ENCODE measurements at regions of chr14 and their contacts with region 1.

Region 1: DNA sequence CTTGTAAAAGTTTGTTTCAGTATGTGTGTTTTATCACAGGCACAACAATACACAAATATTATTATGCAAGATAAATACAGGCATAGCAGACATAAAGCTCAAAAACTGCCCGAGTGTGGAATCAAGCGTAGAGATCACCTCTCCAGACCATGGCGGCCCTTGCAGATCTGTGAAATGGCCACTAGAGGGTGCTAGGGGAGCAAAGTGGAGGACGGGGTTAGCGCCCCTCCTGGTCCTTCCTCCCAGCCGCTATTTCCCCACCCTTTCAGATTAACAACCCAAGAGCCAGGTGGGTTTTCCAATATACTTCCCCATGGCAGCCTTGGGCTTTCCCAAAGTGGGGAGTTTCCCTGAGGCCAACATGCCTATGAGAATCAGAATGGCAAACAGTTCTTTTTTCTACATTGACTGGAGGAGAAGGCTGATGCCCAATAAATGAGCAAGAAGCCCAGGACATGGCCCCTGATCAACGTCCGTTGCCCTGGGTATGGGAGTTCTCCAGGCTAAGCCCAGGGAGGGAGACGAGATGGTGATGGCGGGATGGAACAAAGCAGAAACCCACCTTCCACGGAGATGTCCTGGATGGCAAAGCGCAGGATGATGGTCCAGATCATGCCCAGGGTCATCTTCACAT is 67.4 kb downstream of the ACTN1 start:
- DNase-seq: peak; percentile 81 to 88 (median 88)
- ATAC-seq: peak; percentile 100
- H3K4me3 ChIP-seq: no peak overlapping the region
- H3K27ac ChIP-seq: no peak overlapping the region
- H3K4me1 ChIP-seq: no peaks in the 10 kb centered on the region
- H3K27me3 ChIP-seq: no peaks in the 10 kb centered on the region
- CTCF ChIP-seq: peak; percentile 95 to 100 (median 99)
- EP300 ChIP-seq: no peak
- POLR2A ChIP-seq: no peak
- RAD21 ChIP-seq: peak; percentile 83 to 89

Region 2: DNA sequence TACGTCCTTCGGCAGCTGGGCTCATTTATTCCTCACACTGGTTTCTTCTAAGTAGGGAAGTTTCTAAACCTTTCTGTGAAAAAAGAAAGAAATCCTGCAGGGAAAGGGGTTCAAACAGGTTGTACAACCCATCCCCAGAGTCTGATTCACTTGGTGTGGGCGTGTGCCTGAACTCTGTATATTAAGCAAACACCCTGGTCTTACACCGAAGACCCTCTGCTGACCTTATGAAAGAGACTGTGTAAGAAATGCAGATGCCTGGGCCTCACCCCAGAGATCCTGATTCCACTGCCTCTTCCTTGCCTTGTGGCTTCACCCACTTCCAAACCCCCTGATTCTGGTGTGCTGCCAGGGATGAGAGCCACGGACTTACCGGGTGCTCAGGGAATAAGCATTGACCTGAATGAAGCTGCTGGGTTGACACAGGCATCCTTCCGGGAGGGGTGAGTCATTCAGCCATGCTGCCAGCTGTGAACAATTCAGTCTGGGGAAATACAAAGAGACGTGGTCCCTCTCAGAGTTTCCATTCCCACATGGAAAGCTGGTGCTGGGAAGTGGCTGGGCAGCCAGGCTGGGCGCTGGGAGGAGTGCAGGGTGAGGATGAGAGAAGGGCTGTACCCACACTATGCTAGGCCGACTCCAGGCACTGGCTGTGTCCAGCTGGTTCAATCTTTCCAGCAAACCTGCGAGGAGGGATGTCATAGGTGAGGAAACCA is 93.9 kb after region 1 on chr14:
- CTCF ChIA-PET with region 1: interaction called, 3 read pairs
- POLR2A ChIA-PET with region 1: no interaction called
- in situ Hi-C with region 1: no loop called
- intact Hi-C with region 1: loop called (anchors 10 kb)
- DNase-seq: peak in 1 of 4 experiments; percentile 20
- ATAC-seq: peak; percentile 36; the same call in 1 of the 3 replicates
- H3K4me3 ChIP-seq: no peak overlapping the region
- H3K27ac ChIP-seq: no peak overlapping the region
- H3K4me1 ChIP-seq: peaks cover 0 to 4% of the 10 kb centered on the region in 2 experiments; a peak in 2 of 5 replicates
- H3K27me3 ChIP-seq: 0 out of 5 replicates have a peak, but pooled peaks cover 0 to 5% of the 10 kb centered on the region in 2 experiments
- CTCF ChIP-seq: no peak
- EP300 ChIP-seq: no peak
- POLR2A ChIP-seq: no peak
- RAD21 ChIP-seq: no peak

Region 3: GRCh38 chr14:69090187-69090789 is 178.6 kb after region 1 on chr14:
- CTCF ChIA-PET with region 1: interaction called, 6 read pairs
- POLR2A ChIA-PET with region 1: no interaction called
- in situ Hi-C with region 1: loop called (anchors 10 kb)
- intact Hi-C with region 1: loop called (anchors 1 kb)
- DNase-seq: peak; percentile 10 to 27 (median 16)
- ATAC-seq: peak; percentile 80
- H3K4me3 ChIP-seq: no peak overlapping the region
- H3K27ac ChIP-seq: no peak overlapping the region
- H3K4me1 ChIP-seq: peaks cover 0 to 9% of the 10 kb centered on the region in 2 experiments; a peak in 2 of 5 replicates
- H3K27me3 ChIP-seq: no peaks in the 10 kb centered on the region
- CTCF ChIP-seq: peak; percentile 52 to 56 (median 55)
- EP300 ChIP-seq: no peak
- POLR2A ChIP-seq: no peak
- RAD21 ChIP-seq: peak in 1 of 2 experiments; percentile 46; a peak in 2 of 4 replicates

Region 4: GRCh38 chr14:69107407-69108003 is 195.8 kb after region 1 on chr14:
- CTCF ChIA-PET with region 1: interaction called, 13 read pairs
- POLR2A ChIA-PET with region 1: no interaction called
- in situ Hi-C with region 1: no loop called
- intact Hi-C with region 1: loop called (anchors 2 kb)
- DNase-seq: peak; percentile 14 to 61 (median 26)
- ATAC-seq: peak; percentile 84
- H3K4me3 ChIP-seq: no peak overlapping the region
- H3K27ac ChIP-seq: no peak overlapping the region
- H3K4me1 ChIP-seq: no peaks in the 10 kb centered on the region
- H3K27me3 ChIP-seq: no peaks in the 10 kb centered on the region
- CTCF ChIP-seq: peak; percentile 59 to 74 (median 66); a peak in 5 of 6 replicates
- EP300 ChIP-seq: no peak
- POLR2A ChIP-seq: no peak
- RAD21 ChIP-seq: peak; percentile 21 to 75; a peak in 3 of 4 replicates

Measured in K562 (cell line).